Panc1 (cell line): ENCODE measurements at regions of chr7 and their contacts with region 1.

Region 1: DNA sequence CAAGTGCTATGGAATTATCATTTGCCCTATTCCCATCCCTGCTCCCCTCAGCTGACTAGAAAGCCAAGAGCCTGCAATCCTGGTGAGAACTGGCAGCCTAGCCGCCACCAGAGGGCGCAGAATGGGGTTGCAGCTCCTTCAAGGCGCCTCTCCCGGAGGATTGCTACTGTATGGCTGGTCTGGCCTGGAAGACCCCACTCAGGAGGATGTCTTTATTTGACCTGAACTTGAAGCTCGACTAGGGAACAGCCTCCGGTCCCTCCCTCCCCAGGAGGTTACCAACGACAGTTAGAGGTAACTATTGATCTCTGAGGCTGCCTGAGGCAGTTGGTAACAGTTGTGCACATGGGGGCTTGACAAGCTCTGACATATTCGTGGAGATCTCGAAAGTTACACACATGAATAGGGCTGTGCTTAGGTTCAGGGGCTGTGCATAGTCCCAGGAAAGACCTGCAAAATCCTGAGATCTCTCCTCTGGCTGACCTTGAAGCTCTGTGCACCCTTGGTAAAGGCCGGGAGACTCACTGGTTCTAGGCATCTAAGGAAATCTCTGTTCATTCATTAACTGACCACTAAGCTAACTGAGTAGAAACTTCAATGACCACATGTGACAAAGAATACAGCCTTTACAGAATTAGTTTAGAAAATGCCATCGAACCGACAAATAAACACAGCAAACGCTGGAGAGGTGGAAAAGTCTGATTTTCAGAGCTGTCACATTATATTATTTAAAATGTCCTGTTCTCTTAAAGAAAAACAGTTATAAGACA is 65.7 kb downstream of the TSPAN12 start:
- DNase-seq: peak; percentile 54
- ATAC-seq: peak; percentile 99
- H3K4me3 ChIP-seq: no peak overlapping the region
- H3K27ac ChIP-seq: no peak overlapping the region
- H3K4me1 ChIP-seq: no peaks in the 10 kb centered on the region
- H3K27me3 ChIP-seq: no peaks in the 10 kb centered on the region
- CTCF ChIP-seq: peak; percentile 93

Region 2: DNA sequence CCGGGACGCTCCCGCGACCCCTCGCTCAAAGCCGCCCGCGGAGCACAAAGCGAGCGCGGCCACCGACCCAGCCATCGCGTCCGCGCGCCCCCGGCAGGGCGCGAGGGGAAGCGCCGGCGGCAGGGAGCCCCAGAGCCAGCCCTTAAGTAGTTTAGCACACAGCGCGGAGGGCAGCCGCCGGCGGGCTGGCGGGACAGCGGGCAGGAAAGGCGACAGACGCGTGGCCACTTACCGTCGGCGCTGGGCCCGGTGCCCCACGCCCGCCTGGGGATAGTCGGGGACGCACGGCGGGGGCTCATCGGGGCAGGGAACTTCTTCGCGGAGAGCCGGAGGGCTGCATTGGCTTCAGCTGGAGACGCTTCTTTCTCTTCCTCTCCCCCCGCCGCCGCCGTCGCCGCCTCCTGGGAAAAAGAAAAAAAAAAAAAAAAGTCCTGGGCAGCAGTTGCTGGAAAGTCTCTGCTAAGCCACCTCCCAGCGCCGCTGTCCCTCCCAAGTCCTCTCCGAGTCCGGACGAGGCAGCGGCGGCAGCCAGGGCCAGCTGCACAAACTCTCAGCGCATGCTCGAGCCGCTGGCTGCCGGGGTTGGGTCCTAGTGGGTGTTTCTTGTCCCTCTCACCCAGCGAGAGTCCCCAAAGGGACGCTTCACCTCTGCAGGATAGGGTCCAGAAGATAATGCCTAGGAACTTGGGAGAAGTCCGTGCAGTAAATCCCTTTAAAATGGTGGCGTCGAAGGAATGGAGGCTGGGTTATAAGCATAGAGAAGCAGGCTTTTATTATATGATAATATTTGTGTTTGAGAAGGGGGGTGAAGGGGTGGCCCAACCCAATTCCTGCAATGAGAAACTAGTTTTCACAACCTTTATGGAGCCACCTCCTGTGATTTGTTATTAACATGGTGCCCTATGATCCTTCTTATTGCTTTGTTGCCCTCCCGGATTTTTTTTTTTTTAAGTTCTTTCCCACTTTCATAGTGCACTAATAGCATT is 65.6 kb after region 1 on chr7 and contains the start of gene TSPAN12:
- CTCF ChIA-PET with region 1: interaction called, 15 read pairs
- POLR2A ChIA-PET with region 1: no interaction called
- in situ Hi-C with region 1: no loop called
- intact Hi-C with region 1: no loop called
- DNase-seq: no peak
- ATAC-seq: peak; percentile 96
- H3K4me3 ChIP-seq: peak within 1 kb of the TSS; percentile 53 to 64
- H3K27ac ChIP-seq: no peak within 1 kb of the TSS
- H3K4me1 ChIP-seq: peaks cover 10% of the 10 kb centered on the region; the same call in 1 of the 2 replicates
- H3K27me3 ChIP-seq: peaks cover 32% of the 10 kb centered on the region
- CTCF ChIP-seq: peak; percentile 85
- total RNA-seq, gene TSPAN12: 1.4 TPM

Region 3: DNA sequence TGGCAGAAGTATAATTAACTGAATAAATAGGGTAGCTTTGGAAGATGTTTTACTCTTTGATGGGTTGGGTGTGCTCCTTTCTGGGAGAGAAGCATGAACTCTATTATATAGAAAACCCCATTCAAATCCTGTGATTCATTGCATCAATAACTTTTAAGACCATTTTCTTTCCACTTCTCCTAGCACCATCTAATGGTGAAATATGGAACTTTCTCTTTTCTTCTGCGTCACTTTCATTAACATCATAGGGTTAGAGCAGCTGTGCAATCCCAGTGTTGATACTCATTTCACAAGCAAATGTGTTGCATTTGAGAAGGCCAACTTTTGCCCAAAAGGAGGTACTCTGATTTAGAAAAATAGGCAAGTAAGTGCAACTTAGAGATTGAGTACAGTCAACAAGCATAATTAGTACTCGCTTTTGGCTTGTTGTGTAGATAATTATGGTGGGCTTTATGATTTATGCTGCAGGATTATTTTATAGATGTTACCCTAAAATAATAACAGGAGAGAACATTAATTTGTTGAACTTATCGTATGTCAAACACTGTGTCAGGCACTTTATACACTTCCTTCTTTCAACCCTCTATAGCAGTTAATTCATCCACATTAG is 289.2 kb after region 1 on chr7:
- CTCF ChIA-PET with region 1: no interaction called
- POLR2A ChIA-PET with region 1: no interaction called
- in situ Hi-C with region 1: no loop called
- intact Hi-C with region 1: loop called (anchors 5 kb)
- DNase-seq: peak; percentile 42
- ATAC-seq: peak; percentile 79
- H3K4me3 ChIP-seq: no peak overlapping the region
- H3K27ac ChIP-seq: no peak overlapping the region
- H3K4me1 ChIP-seq: no peaks in the 10 kb centered on the region
- H3K27me3 ChIP-seq: 0 out of 2 replicates have a peak, but pooled peaks cover 2% of the 10 kb centered on the region
- CTCF ChIP-seq: peak; percentile 70; the same call in 1 of the 2 replicates

Region 4: DNA sequence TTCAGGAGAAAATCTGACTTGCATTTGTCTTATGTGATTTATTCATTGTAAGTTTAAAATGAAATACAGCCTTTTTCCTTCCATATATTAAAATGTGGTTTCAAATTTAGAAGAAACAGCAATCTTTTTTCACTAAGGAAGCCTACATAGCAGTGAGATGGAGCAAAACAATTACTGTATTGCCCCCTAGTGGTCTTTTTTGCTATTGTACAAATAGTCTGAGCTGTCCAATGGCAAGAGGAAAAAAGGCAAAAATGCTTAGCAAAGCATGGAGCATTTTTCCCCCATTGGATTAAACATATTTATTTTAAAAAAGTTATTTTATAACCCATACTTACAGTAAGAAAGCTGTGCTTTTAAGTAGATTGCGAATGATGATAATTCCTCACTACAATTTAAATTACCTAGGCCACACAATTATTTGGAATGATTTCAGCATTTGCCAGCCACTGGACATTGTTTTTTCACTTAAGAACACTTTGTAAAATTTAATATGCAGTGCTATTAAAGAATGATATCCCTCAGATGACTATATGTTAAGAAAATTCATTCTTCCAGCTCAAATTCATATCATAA is 315.7 kb after region 1 on chr7:
- CTCF ChIA-PET with region 1: interaction called, 5 read pairs
- POLR2A ChIA-PET with region 1: no interaction called
- in situ Hi-C with region 1: no loop called
- intact Hi-C with region 1: loop called (anchors 5 kb)
- DNase-seq: peak; percentile 55
- ATAC-seq: peak; percentile 90
- H3K4me3 ChIP-seq: no peak overlapping the region
- H3K27ac ChIP-seq: no peak overlapping the region
- H3K4me1 ChIP-seq: no peaks in the 10 kb centered on the region
- H3K27me3 ChIP-seq: peaks cover 18% of the 10 kb centered on the region
- CTCF ChIP-seq: peak; percentile 76; the same call in 1 of the 2 replicates